ENCODE measurements at regions of chr7 and their contacts with region 1.

Region 1: DNA sequence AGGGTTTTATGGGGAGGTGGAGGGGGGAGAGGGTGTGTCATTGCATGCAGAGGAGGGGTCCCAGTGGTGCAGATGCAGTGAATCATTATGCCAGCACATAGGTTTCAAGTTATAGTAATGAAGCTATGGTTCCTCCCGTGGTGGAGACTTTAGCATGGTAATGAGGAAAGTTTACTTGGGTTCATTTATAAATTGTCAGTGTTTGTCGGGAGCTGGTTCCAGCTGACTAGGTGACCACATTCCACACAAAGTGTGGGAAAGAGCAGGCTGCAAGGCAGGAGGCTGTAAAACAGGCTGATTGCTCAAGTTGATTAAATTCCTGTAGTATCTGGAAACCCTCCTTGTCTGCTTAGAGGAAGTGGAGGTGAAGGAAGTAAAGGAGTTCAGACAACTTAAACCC is 78.9 kb downstream of the SRI start:
- DNase-seq: no peak
- H3K4me3 ChIP-seq: no peak overlapping the region
- H3K27ac ChIP-seq: no peak overlapping the region
- H3K4me1 ChIP-seq: no peaks in the 10 kb centered on the region
- H3K27me3 ChIP-seq: no peaks in the 10 kb centered on the region
- CTCF ChIP-seq: no peak

Region 2: DNA sequence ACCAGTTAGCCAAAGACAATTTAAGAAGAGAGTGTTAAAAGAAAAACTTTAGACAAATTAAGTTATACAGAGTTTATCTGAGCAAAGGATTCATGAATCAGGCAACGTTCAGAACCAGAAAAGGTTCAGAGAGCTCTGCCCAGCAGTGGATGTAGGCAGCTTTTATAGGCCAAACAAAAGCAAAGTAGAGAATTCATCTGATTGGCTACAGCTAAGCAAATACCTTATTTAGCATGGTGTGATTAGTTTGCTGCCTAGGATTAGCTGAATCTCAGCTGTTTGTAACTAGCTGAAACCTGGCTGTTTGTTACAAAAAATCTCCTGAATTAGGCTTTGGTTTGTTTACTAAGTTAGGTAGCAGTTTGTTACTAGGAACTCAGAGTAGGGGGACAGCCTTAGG is 330.8 kb before region 1 on chr7:
- CTCF ChIA-PET with region 1: no interaction called
- POLR2A ChIA-PET with region 1: no interaction called
- intact Hi-C with region 1: no loop called
- DNase-seq: no peak
- H3K4me3 ChIP-seq: no peak overlapping the region
- H3K27ac ChIP-seq: no peak overlapping the region
- H3K4me1 ChIP-seq: peaks cover 2% of the 10 kb centered on the region
- H3K27me3 ChIP-seq: no peaks in the 10 kb centered on the region
- CTCF ChIP-seq: no peak

Region 3: GRCh38 chr7:88565401-88565800 is 424.5 kb after region 1 on chr7:
- CTCF ChIA-PET with region 1: no interaction called
- POLR2A ChIA-PET with region 1: interaction called, 12 read pairs
- intact Hi-C with region 1: no loop called
- DNase-seq: no peak
- H3K4me3 ChIP-seq: no peak overlapping the region
- H3K27ac ChIP-seq: no peak overlapping the region
- H3K4me1 ChIP-seq: no peaks in the 10 kb centered on the region
- H3K27me3 ChIP-seq: no peaks in the 10 kb centered on the region
- CTCF ChIP-seq: no peak